ENCODE measurements at regions of chr14 and their contacts with region 1.

Region 1: GRCh38 chr14:104708606-104709268 is 15.3 kb upstream of the ADSS1 start:
- DNase-seq: peak; percentile 72
- ATAC-seq: peak; percentile 98
- H3K4me3 Mint-ChIP-seq: no peak overlapping the region
- H3K27ac Mint-ChIP-seq: no peak overlapping the region
- H3K4me1 Mint-ChIP-seq: peaks cover 3% of the 10 kb centered on the region
- H3K27me3 Mint-ChIP-seq: no peaks in the 10 kb centered on the region
- CTCF ChIP-seq: no peak

Region 2: DNA sequence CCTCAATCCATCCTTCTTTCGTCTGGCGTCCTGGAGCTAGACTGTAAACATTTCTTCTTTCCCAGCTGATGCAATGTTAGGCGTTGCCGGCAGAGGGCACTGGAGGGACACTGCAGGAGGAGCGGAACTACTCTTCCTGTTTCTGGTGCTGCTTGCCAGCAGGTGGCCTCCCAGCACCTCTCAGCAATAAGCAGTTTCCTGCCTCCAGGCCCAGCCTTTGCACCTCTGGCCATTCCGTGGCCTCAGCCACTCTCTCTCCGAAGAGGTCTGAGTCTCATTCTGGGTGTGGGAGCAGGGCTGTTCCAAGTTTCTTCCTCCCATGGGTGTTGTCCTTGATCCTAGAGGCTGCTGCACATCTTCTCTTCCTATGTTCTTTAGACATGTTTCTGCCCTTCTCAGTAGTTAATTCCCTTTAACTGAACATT is 630.7 kb before region 1 on chr14:
- CTCF ChIA-PET with region 1: no interaction called
- POLR2A ChIA-PET with region 1: no interaction called
- intact Hi-C with region 1: loop called (anchors 1 kb)
- DNase-seq: peak; percentile 75
- ATAC-seq: peak; percentile 99
- H3K4me3 Mint-ChIP-seq: no peak overlapping the region
- H3K27ac Mint-ChIP-seq: peak overlapping the region; percentile 55
- H3K4me1 Mint-ChIP-seq: peaks cover 9% of the 10 kb centered on the region
- H3K27me3 Mint-ChIP-seq: peaks cover 20% of the 10 kb centered on the region
- CTCF ChIP-seq: peak; percentile 84

Region 3: GRCh38 chr14:104650057-104650981 is 58.4 kb before region 1 on chr14:
- CTCF ChIA-PET with region 1: interaction called, 12 read pairs
- POLR2A ChIA-PET with region 1: interaction called, 3 read pairs
- intact Hi-C with region 1: loop called (anchors 1 kb)
- DNase-seq: peak; percentile 79
- ATAC-seq: peak; percentile 92
- H3K4me3 Mint-ChIP-seq: peak overlapping the region; percentile 79
- H3K27ac Mint-ChIP-seq: peak overlapping the region; percentile 78
- H3K4me1 Mint-ChIP-seq: peaks cover 60% of the 10 kb centered on the region
- H3K27me3 Mint-ChIP-seq: no peaks in the 10 kb centered on the region
- CTCF ChIP-seq: peak; percentile 37

Region 4: GRCh38 chr14:104665657-104666522 is 42.8 kb before region 1 on chr14:
- CTCF ChIA-PET with region 1: interaction called, 11 read pairs
- POLR2A ChIA-PET with region 1: no interaction called
- intact Hi-C with region 1: loop called (anchors 1 kb)
- DNase-seq: no peak
- ATAC-seq: peak; percentile 52
- H3K4me3 Mint-ChIP-seq: peak overlapping the region; percentile 16
- H3K27ac Mint-ChIP-seq: peak overlapping the region; percentile 72
- H3K4me1 Mint-ChIP-seq: peaks cover 55% of the 10 kb centered on the region
- H3K27me3 Mint-ChIP-seq: no peaks in the 10 kb centered on the region
- CTCF ChIP-seq: no peak

Region 5: DNA sequence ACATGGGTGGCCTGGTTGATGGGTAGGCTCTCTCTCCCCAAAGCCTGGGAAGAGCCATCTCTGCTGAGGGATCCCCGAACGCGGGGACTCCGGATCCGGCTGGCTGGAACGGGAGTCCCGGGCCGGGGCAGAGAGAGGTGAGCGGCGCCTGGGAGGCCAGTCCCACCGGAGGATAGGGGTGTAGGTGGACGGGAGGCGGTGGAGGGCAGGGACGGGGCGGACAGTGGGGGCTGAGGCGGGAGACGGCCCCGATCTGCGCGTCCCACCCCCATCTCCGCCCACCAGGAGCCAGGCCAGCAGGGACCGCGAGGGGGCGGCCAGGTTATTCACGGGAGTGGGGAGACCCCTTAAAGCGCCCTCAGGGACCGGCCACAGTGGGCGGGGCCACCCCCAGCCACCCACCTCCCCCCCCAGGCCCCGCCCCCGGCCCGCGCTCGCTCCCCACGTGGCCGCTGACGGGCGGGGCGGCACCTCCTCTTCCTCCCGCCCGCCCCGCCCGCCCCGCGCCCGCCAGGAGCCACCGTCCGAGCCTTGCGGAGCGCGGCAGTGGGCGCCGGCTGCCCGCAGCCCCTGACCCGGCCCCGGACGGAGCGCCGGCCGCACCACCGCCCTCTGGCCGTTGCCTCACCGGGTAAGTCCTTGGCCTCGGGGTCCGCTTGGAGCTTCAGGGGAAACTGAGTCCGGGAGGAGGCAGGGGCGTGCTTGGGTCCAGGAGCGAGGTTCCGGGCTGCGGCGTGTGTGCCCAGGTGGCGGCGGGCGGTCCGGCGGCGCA is 19.4 kb before region 1 on chr14 and contains the start of gene INF2:
- CTCF ChIA-PET with region 1: interaction called, 4 read pairs
- POLR2A ChIA-PET with region 1: interaction called, 3 read pairs
- intact Hi-C with region 1: loop called (anchors 1 kb)
- DNase-seq: peak; percentile 63
- ATAC-seq: peak; percentile 78
- H3K4me3 Mint-ChIP-seq: peak within 1 kb of the TSS; percentile 72
- H3K27ac Mint-ChIP-seq: no peak within 1 kb of the TSS
- H3K4me1 Mint-ChIP-seq: peaks cover 68% of the 10 kb centered on the region
- H3K27me3 Mint-ChIP-seq: no peaks in the 10 kb centered on the region
- CTCF ChIP-seq: no peak
- total RNA-seq, gene INF2: 38.6 and 47.2 TPM in 2 replicates